Activated CD4-positive, alpha-beta T cell treated with anti-CD3 and anti-CD28 coated beads for 36 hours (primary cell): ENCODE measurements at regions of chr11 and their contacts with region 1.

Region 1: DNA sequence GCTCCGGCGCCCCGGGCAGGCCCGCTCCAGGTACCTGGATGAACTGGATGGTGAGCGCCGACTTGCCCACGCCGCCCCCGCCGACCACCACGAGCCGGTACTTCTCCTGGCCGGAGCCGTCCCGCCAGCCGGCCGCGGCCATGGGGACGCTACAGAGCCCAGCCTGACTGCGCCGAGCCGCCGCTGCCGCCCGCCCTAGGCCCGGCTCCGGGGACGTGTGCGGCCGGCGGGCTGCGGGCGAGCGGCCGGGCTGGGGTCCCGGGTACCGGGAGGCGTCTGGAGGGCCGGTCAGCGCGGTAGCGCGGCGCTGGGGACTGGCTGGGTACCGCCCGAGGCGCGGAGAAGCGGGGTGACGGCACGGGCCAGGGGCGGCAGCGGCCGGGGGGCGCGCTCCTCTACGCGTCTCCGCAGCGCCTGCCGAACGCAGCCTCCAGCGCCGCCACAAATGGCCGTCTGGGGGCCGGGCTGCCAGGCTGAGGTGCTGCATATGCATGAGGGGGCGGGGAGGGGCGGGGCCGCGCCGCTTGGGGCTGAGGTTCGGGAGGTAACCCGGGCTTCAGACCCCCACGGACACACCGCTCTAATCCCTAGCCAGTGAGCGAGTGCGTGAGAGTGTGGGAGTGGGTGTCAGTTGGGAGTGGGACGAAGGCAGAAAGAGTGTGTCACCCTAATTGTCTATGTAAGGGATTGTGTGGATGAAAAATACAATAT is at the start of gene RRAS2:
- DNase-seq: peak; percentile 88
- ATAC-seq: peak; percentile 93
- H3K4me3 Mint-ChIP-seq: peak within 1 kb of the TSS; percentile 95
- H3K27ac Mint-ChIP-seq: peak within 1 kb of the TSS; percentile 89
- H3K4me1 Mint-ChIP-seq: peaks cover 26% of the 10 kb centered on the region
- H3K27me3 Mint-ChIP-seq: no peaks in the 10 kb centered on the region
- total RNA-seq, gene RRAS2: 35.0 to 48.0 TPM

Region 2: GRCh38 chr11:14288189-14288935 is 70.5 kb before region 1 on chr11:
- CTCF ChIA-PET with region 1: no interaction called
- POLR2A ChIA-PET with region 1: no interaction called
- intact Hi-C with region 1: no loop called
- DNase-seq: no peak
- ATAC-seq: peak; percentile 42
- H3K4me3 Mint-ChIP-seq: no peak overlapping the region
- H3K27ac Mint-ChIP-seq: no peak overlapping the region
- H3K4me1 Mint-ChIP-seq: peaks cover 5% of the 10 kb centered on the region
- H3K27me3 Mint-ChIP-seq: no peaks in the 10 kb centered on the region

Region 3: DNA sequence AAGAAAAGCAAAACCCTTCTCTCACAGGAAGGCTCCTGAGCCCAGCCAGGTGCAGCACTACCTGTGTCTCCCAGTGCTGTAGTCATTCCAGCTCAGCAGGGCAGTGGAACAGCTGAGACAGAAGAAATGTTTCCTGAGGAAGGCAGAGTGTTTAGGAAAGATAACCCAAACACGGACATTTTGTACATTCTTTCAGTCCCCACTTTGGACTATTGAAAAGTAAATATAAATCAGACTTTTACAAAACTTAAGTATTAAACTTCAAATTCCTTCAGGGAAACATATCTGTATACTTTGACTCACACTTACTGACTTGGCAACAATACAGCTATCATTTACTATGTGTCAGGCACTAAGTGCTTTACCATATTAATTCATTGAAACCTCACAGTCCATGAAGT is 40.3 kb before region 1 on chr11:
- CTCF ChIA-PET with region 1: no interaction called
- POLR2A ChIA-PET with region 1: no interaction called
- intact Hi-C with region 1: loop called in 1 of 2 experiments (anchors 5 kb)
- DNase-seq: no peak
- ATAC-seq: no peak
- H3K4me3 Mint-ChIP-seq: no peak overlapping the region
- H3K27ac Mint-ChIP-seq: no peak overlapping the region
- H3K4me1 Mint-ChIP-seq: peaks cover 38% of the 10 kb centered on the region
- H3K27me3 Mint-ChIP-seq: no peaks in the 10 kb centered on the region

Region 4: DNA sequence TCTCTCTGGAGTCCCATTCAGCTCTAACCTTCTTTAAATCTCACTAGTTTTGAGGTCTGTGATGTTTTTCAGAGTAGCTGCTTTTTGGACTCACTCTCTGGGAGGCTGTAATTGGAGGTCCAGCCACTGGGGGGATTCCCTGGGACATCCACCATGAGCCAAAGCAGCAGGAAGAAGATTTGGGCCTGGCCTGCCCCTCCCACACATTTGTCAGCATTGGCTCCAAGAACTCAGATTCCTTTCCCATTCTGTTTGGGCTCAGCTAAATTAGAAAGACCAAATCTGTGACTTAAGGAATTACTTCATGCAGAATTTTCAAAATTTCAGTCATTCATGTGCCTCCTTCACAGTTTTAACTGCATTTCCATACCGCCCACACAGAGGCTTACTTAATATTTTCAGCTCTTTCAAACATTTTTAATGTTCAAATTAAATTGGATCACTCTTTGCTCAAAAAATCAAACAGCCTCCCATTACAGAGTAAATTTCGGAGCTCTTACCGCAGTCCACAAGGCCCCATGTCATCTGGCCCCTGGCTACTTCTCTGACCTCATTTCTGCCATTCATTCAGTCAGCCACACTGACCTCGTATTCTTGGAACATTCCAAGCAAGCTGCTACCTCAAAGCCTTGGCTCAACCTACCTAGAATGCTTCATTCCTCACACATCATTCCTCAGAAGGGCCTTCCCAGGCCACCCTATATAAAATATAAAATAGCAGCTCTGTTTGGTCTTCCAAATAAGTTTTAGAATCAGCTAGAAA is 54.6 kb after region 1 on chr11:
- CTCF ChIA-PET with region 1: interaction called, 3 read pairs
- POLR2A ChIA-PET with region 1: no interaction called
- intact Hi-C with region 1: loop called (anchors 1 to 5 kb)
- DNase-seq: peak; percentile 36
- ATAC-seq: no peak
- H3K4me3 Mint-ChIP-seq: no peak overlapping the region
- H3K27ac Mint-ChIP-seq: peak overlapping the region; percentile 44
- H3K4me1 Mint-ChIP-seq: peaks cover 40% of the 10 kb centered on the region
- H3K27me3 Mint-ChIP-seq: no peaks in the 10 kb centered on the region

Region 5: DNA sequence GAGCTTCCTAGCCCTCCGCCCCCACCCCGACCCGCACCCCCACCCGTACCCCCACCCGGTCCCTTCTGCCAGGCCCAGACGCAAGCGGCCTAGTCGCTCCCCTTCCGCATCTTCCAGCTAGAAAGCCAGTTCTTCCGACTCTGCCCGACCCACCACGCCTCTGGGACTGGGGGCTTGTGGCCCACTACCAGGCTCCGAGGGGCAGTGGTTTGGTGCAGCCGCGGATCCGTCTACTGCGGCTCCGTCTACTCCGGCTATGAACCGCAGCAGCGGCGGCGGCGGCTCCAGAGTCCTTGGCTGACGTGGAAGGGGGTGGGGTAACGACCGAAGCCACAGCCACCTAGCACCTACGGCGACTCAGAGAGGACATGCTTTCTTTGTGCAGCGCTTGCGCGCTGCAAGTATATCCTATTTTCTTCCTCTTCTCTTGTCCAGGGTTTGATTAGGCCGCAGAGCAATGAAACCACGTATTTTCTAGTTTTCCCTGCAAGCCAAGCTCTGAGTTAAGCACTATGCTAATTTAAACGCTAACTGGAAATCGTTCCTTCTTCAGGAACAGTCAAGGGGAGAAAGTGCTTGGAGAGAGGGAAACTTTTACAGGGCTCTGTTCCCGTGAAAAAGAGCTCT is 140.8 kb after region 1 on chr11 and contains the start of gene COPB1:
- CTCF ChIA-PET with region 1: no interaction called
- POLR2A ChIA-PET with region 1: no interaction called
- intact Hi-C with region 1: loop called in 1 of 2 experiments (anchors 2 kb)
- DNase-seq: peak; percentile 96
- ATAC-seq: peak; percentile 92
- H3K4me3 Mint-ChIP-seq: peak within 1 kb of the TSS; percentile 87
- H3K27ac Mint-ChIP-seq: peak within 1 kb of the TSS; percentile 95
- H3K4me1 Mint-ChIP-seq: peaks cover 35% of the 10 kb centered on the region
- H3K27me3 Mint-ChIP-seq: no peaks in the 10 kb centered on the region
- total RNA-seq, gene COPB1: 102 to 106 TPM